ENCODE measurements at regions of chr16 and their contacts with region 1.

Region 1: DNA sequence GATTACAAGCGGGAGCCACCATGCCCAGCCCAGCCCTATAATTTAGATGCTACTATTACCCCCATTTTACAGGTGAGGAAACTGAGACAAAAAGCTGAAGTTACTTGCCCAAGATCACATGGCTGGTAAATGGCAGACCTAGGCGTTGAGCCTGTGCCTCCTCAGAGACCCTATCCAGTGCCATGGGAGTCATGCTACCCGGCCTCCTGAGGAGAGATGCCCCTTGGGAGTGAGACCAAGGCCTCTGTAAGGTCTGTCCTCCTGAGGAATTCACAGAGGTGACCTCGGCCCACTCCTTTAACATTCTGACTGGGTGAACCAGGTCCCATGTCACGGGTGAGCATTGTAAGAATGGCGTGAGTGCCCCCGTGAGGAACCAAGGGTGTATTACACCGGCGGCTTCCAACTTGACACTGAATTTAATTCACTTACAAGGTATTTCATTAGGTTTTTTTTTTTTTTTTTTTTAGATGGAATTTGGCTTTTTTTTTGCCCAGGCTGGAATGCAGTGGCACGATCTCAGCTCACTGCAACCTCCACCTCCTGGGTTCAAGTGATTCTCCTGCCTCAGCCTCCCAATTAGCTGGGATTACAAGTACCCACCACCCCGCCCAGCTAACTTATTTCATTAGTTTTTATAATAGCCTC is 95.7 kb downstream of the ABCC6 start:
- DNase-seq: peak; percentile 40 to 66
- ATAC-seq: peak; percentile 75 to 91
- H3K4me3 ChIP-seq: no peak overlapping the region
- H3K27ac ChIP-seq: peak overlapping the region in 2 of 4 donors; percentile 44 to 53
- H3K4me1 ChIP-seq: no peaks in the 10 kb centered on the region
- H3K27me3 ChIP-seq: no peaks in the 10 kb centered on the region
- CTCF ChIP-seq: peak; percentile 85 to 93 (median 88)
- POLR2A ChIP-seq: no peak

Region 2: GRCh38 chr16:15874745-15875314 is 252.8 kb before region 1 on chr16:
- in situ Hi-C with region 1: loop called (anchors 5 to 10 kb)
- intact Hi-C with region 1: loop called (anchors 1 kb)
- DNase-seq: peak; percentile 11 to 47
- ATAC-seq: peak; percentile 80 to 81
- H3K4me3 ChIP-seq: no peak overlapping the region
- H3K27ac ChIP-seq: peak overlapping the region; percentile 64 to 83 (median 74)
- H3K4me1 ChIP-seq: peaks cover 8 to 24% of the 10 kb centered on the region in 2 donors
- H3K27me3 ChIP-seq: no peaks in the 10 kb centered on the region
- CTCF ChIP-seq: peak; percentile 65 to 81 (median 73)
- POLR2A ChIP-seq: no peak

Region 3: GRCh38 chr16:16096121-16096857 is 31.3 kb before region 1 on chr16:
- in situ Hi-C with region 1: no loop called
- intact Hi-C with region 1: no loop called
- DNase-seq: no peak
- ATAC-seq: no peak
- H3K4me3 ChIP-seq: no peak overlapping the region
- H3K27ac ChIP-seq: peak overlapping the region in 3 of 4 donors; percentile 19 to 42 (median 27)
- H3K4me1 ChIP-seq: peaks cover 0 to 7% of the 10 kb centered on the region in 2 donors
- H3K27me3 ChIP-seq: no peaks in the 10 kb centered on the region
- CTCF ChIP-seq: no peak
- POLR2A ChIP-seq: no peak

Measured in gastrocnemius medialis (tissue), 4 donors.